Activated T-helper 1 cell treated with anti-CD3 and anti-CD28 coated beads, Interleukin-12 subunit alpha, Interleukin-12 subunit beta, Interleukin-2, Interleukin-4 antibody, amounts not matched to agents 30 ng/mL and 10 ng/mL and 1 ng/mL, durations not matched to agents 14 hours and 24 hours and 36 hours (primary cell): ENCODE measurements at regions of chr12 and their contacts with region 1.

Region 1: DNA sequence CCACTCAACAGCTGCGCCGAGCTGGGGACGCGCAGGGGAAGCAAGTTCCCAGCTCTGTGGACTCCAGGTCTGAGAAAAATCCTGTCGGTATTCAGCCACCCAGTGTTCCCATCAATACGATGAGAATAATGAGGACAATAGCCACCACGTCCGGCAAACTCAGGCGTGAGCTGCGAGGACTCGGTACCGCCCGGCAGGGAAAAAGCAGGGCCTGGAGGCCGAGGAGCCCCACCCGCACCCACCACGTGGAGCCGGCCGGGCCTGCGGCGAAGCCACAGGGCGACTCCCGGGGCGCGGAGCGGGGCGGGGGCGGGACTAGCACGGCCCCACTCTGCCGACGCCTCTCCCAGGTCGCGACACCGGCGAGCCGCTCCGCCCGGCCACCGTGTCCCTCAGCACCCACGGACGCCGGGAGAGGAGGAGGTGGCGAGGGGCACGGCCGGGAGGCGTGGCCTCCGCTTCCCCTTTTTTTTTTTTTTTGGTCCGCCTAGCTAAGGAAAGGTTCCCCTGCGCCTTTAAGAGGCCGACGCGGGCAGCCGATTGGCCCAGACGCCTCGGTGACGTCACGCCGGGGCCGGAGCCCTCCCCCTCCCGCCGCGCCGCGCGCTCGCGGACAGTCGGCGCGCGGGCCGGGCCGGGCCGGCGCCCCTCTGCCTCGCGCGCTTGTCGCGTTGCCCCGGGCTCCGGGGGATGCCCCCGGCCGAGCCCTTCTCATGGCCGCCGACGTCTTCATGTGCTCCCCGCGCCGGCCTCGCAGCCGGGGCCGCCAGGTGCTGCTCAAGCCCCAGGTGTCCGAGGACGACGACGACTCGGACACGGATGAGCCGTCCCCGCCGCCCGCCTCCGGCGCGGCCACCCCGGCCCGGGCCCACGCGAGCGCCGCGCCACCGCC is at the start of gene MLXIP:
- DNase-seq: peak; percentile 88
- H3K4me3 Mint-ChIP-seq: peak within 1 kb of the TSS; percentile 94
- H3K27ac Mint-ChIP-seq: peak within 1 kb of the TSS; percentile 76
- H3K4me1 Mint-ChIP-seq: peaks cover 44% of the 10 kb centered on the region
- H3K27me3 Mint-ChIP-seq: peaks cover 6% of the 10 kb centered on the region
- total RNA-seq, gene MLXIP: 59.0 and 62.1 TPM in 2 replicates

Region 2: GRCh38 chr12:121697098-121697698 is 381.2 kb before region 1 on chr12:
- intact Hi-C with region 1: no loop called
- DNase-seq: peak; percentile 24
- H3K4me3 Mint-ChIP-seq: no peak overlapping the region
- H3K27ac Mint-ChIP-seq: no peak overlapping the region
- H3K4me1 Mint-ChIP-seq: no peaks in the 10 kb centered on the region
- H3K27me3 Mint-ChIP-seq: peaks cover 10% of the 10 kb centered on the region

Region 3: DNA sequence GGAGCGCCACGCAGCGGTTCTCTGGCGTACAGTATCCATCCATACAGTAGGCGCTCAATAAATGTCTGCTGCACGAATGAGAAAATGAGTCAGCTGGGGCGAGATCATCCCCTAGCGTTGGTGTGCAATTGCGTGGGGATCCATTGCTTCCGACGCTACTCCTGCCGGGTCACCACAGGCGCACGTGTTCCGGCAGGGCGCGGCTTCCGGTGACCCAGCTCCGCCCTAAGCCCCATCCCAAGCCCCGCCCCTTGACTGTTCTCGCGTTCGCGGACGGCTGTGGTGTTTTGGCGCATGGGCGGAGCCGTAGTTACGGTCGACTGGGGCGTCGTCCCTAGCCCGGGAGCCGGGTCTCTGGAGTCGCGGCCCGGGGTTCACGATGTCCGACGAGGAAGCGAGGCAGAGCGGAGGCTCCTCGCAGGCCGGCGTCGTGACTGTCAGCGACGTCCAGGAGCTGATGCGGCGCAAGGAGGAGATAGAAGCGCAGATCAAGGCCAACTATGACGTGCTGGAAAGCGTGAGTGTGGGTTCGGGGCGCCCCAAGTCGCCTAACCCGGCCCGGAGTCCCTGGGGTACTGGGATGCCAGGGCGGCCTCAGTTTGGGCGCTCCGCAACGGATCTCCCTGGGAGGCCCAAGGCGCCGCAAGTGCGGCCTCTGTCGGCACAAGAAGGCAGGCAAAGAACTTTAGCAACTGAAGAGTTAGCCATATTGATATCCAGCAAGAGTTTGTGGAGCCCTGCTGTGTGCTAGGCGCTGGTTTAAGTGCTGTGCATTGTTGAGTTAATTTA is 189.7 kb before region 1 on chr12 and contains the start of gene PSMD9:
- intact Hi-C with region 1: loop called (anchors 5 kb)
- DNase-seq: peak; percentile 98
- H3K4me3 Mint-ChIP-seq: peak within 1 kb of the TSS; percentile 99
- H3K27ac Mint-ChIP-seq: peak within 1 kb of the TSS; percentile 99
- H3K4me1 Mint-ChIP-seq: peaks cover 35% of the 10 kb centered on the region
- H3K27me3 Mint-ChIP-seq: peaks cover 2% of the 10 kb centered on the region
- total RNA-seq, gene PSMD9: 63.9 and 67.5 TPM in 2 replicates

Region 4: DNA sequence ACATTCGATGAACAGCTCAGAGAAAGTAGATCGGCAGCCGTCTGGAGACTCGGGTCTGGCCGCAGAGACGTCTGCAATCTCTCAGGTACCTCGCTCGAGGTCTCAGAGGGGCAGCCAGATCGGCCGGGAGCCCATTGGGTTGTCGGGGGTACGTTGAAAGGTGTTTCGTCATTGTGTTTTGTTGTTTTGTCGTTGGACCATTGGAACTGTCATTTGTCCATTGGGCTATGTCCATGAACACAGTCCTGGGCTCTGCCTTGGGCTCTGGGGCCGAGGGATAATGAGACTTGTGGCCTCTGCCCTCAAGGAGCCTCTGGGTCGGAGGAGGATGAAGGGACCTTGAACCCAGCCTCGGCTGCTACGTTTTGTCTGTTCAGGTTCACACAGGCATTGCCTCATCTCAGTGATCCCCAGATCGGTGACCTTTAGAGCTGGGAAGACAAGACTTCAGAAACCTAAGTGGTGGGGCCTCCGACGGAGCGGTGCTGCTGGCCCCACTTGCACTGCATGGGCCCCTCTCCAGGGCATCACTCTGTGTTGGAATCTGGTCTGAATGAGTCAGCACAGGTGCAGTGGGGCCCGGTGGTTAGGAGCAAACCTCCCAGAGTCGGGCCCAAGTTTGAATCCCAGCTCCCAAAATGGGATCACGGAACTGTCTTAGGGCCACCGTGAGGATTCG is 23.4 kb before region 1 on chr12:
- intact Hi-C with region 1: loop called (anchors 1 kb)
- DNase-seq: no peak
- H3K4me3 Mint-ChIP-seq: no peak overlapping the region
- H3K27ac Mint-ChIP-seq: no peak overlapping the region
- H3K4me1 Mint-ChIP-seq: no peaks in the 10 kb centered on the region
- H3K27me3 Mint-ChIP-seq: no peaks in the 10 kb centered on the region

Region 5: GRCh38 chr12:122107261-122107660 is 28.9 kb after region 1 on chr12:
- intact Hi-C with region 1: loop called (anchors 1 kb)
- DNase-seq: no peak
- H3K4me3 Mint-ChIP-seq: no peak overlapping the region
- H3K27ac Mint-ChIP-seq: no peak overlapping the region
- H3K4me1 Mint-ChIP-seq: peaks cover 62% of the 10 kb centered on the region
- H3K27me3 Mint-ChIP-seq: no peaks in the 10 kb centered on the region

Region 6: DNA sequence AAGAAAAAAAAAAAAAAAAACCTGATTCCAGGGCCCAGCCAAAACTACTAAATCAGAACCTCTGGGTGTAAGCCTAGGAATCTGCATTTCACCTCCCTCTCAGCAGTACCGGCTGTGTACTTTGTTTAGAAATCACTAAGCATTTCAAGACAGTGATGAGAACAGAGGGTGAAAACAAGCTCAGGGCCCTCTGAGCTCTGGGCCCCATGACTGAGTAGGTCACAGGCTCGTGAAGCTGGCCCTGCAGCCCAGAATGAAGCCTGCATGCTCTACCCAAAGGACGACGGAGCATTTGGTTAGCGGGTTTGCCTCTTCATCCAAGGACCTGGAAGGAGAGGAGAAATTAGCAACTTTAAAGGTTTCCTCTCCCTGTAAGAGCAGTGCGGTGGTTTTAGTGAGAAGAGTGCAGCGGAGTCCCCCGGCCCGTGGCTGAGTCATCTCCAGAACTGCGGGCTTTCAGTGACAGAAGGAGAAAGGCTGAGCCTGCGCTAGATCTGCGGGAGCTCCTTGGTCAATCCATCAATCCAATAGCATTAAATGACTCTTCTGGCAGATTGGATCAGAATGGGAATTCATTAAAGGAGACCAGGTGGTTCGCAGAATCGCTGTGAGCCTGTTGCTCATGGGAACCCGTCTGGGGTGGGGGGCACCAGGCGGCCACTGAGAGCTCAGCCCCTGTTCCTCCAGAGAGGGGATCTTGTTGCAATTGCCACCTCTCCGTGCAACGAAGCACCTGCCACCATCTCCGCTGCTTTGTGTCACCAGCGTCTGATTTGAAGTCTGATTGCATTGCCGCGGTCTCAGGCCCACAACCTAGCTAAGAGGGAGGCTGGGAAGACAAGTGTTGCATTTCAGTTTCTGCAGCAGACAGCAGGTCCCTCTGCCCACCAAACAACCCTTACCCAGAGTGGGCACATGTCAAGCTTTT is 88.3 kb after region 1 on chr12:
- intact Hi-C with region 1: loop called (anchors 2 kb)
- DNase-seq: peak; percentile 48
- H3K4me3 Mint-ChIP-seq: no peak overlapping the region
- H3K27ac Mint-ChIP-seq: no peak overlapping the region
- H3K4me1 Mint-ChIP-seq: peaks cover 34% of the 10 kb centered on the region
- H3K27me3 Mint-ChIP-seq: no peaks in the 10 kb centered on the region

Region 7: DNA sequence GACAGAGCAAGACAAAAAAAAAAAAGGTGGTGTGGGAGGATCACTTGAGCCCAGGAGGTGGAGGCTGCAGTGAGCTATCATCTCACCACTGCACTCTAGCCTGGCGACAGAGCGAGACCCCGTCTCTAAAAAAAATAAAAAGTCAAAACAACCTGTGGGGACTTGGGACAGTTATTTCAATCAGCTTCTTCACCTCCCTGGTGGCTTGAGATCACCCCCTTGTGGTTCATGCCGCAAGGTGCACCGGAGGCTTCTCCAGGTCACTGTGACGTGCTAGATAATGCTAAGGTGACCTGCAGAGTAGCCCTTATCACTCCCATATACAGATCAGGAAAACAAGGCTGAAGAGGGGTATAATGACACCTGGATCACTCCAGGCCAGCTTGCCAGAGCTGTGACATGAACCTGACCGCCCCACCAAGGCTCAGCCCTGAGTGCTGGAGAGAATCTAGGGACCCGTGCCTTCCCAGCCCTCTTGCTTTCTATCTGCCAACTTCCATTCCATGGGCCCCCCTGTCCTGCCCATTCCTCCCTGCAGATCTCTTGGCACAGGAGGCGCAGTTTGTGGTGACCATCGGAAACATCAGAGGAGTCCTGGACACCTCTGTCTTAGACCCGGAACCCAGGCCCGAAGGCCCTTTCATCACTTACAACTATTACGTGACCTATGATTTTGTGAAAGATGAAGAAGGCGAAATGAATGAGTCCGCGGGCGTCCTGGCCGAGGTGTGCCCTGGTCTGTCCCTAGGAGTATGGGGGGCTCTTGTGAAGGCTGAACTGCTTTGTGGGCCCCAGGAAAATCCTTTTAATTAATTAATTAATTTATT is 112.7 kb after region 1 on chr12:
- intact Hi-C with region 1: no loop called
- DNase-seq: peak; percentile 59
- H3K4me3 Mint-ChIP-seq: no peak overlapping the region
- H3K27ac Mint-ChIP-seq: no peak overlapping the region
- H3K4me1 Mint-ChIP-seq: peaks cover 5% of the 10 kb centered on the region
- H3K27me3 Mint-ChIP-seq: peaks cover 9% of the 10 kb centered on the region

Region 8: DNA sequence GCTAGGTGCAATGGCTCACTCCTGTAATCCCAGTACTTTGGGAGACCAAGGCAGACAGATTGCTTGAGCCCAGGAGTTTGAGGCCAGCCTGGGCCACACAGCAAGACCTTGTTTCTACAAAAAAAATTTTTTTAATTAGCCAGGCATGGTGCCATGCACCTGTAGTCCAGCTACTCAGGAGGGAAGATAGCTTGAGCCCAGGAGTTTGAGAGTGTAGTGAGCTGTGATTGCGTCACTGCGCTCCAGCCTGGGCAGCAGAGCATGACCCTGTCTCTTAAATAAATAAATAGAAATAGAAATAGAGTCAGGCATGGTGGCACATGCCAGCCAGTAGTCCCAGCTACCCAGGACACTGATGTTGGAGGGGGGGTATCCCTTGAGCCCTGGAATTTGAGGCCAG is 380.8 kb after region 1 on chr12:
- intact Hi-C with region 1: no loop called
- DNase-seq: no peak
- H3K4me3 Mint-ChIP-seq: no peak overlapping the region
- H3K27ac Mint-ChIP-seq: no peak overlapping the region
- H3K4me1 Mint-ChIP-seq: peaks cover 11% of the 10 kb centered on the region
- H3K27me3 Mint-ChIP-seq: no peaks in the 10 kb centered on the region

Region 9: DNA sequence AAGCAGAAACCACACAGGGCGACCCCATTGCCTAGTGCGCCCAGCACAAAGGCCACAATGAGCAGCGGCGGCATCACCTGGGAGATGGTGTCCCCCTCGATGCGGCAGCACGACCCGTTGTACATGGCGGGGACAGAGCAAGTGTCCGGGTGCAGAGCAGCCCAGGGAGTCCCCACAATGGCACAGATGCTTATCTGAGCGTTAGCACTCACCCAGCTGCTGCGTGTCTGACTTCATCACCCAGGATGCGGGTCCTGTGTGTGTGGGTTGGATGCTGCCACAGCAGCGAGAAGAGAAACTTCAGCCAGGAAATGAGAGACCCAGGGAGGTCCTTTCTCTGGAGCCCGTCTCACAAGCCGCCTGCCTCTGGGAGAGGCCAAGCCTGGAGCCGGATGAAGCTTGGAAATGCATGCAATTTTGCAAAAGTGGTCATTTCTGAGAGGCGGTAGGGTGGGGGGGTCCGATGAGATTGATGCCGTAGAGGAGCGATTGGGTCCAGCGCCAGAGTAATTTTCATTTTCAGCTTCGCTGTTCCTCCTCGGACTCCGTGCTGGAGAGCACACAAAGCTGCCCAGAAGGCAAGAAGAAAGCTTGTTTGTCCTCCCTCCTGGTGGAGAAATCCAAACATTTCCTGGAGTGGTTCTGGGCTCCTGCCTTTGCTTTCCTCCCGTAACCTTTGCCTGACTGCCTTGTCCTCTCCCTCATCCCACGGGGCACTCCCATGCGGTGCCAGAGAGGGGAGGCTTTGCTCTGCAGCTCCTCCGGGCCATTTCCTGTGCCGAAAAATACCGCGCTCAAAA is 652.0 kb after region 1 on chr12 and contains the start of gene HCAR1:
- intact Hi-C with region 1: loop called (anchors 10 kb)
- DNase-seq: peak; percentile 74
- H3K4me3 Mint-ChIP-seq: peak within 1 kb of the TSS; percentile 91
- H3K27ac Mint-ChIP-seq: peak within 1 kb of the TSS; percentile 90
- H3K4me1 Mint-ChIP-seq: peaks cover 79% of the 10 kb centered on the region
- H3K27me3 Mint-ChIP-seq: no peaks in the 10 kb centered on the region
- total RNA-seq, gene HCAR1: 7.6 and 8.6 TPM in 2 replicates